A549 (cell line): ENCODE measurements at regions of chr14 and their contacts with region 1.

Region 1: GRCh38 chr14:22614224-22614799 is 16.2 kb downstream of the ABHD4 start:
- DNase-seq: peak; percentile 81 to 94
- ATAC-seq: peak; percentile 93 to 94
- H3K4me3 ChIP-seq: no peak overlapping the region
- H3K27ac ChIP-seq: peak overlapping the region; percentile 71 to 89
- H3K4me1 ChIP-seq: peaks cover 31% of the 10 kb centered on the region
- CTCF ChIP-seq: no peak
- EP300 ChIP-seq: peak in 1 of 2 experiments; percentile 74; a peak in 2 of 5 replicates
- POLR2A ChIP-seq: no peak
- RAD21 ChIP-seq: no peak

Region 2: DNA sequence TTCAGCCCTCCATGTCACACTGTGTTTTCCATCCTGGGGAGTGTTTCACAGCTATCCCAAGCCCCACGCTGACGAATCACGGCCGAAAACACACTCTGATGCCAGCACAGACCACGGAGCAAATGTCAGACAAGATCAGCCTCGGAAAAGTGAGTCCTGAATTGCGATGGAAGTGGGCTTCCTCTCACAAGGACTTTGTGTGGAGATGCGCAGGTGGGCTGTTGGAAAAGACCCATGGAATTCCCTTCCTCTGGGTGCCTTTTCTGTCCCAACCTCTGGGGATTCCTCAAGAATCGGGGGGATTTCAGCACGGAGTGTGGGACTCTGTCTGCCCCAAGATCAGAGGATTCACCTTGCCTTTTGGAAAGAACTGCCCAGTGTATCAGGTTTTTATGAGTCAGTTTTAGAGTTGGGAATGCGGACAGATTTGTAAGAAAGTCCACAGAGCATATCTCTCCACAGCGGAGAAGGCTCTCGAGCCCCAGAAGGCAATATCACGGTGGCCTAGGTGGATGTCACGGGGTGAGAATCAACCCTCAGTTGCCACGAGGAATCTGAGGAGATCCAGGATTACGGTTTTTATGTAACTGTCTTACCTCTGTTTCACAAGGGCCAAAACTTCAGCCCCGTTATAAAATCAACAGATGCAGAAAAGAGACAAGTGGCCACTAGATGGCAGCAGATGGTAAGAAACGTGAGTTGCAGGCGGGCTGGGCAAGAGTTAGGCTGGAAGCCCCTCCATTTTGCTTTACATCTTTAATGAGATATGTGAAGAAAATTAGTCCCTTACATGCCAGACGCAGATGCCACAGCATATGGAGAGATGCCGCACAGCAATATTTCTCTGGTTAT is 227.2 kb before region 1 on chr14:
- CTCF ChIA-PET with region 1: no interaction called
- POLR2A ChIA-PET with region 1: no interaction called
- DNase-seq: peak; percentile 72 to 82
- ATAC-seq: peak; percentile 55 to 78; a peak in 4 of 6 replicates
- H3K4me3 ChIP-seq: no peak overlapping the region
- H3K27ac ChIP-seq: no peak overlapping the region
- H3K4me1 ChIP-seq: peaks cover 32% of the 10 kb centered on the region
- CTCF ChIP-seq: peak; percentile 90
- EP300 ChIP-seq: no peak
- POLR2A ChIP-seq: no peak
- RAD21 ChIP-seq: peak; percentile 92 to 93

Region 3: GRCh38 chr14:22519877-22520685 is 94.2 kb before region 1 on chr14:
- CTCF ChIA-PET with region 1: no interaction called
- POLR2A ChIA-PET with region 1: no interaction called
- DNase-seq: no peak
- ATAC-seq: no peak
- H3K4me3 ChIP-seq: no peak overlapping the region
- H3K27ac ChIP-seq: no peak overlapping the region
- H3K4me1 ChIP-seq: no peaks in the 10 kb centered on the region
- CTCF ChIP-seq: no peak
- EP300 ChIP-seq: no peak
- POLR2A ChIP-seq: no peak
- RAD21 ChIP-seq: no peak

Region 4: GRCh38 chr14:22589096-22589839 is 25.0 kb before region 1 on chr14 and contains the start of gene DAD1:
- CTCF ChIA-PET with region 1: interaction called, 4 read pairs
- POLR2A ChIA-PET with region 1: interaction called, 14 read pairs
- DNase-seq: peak; percentile 99
- ATAC-seq: peak; percentile 96
- H3K4me3 ChIP-seq: peak within 1 kb of the TSS; percentile 80
- H3K27ac ChIP-seq: peak within 1 kb of the TSS; percentile 79 to 90
- H3K4me1 ChIP-seq: peaks cover 32% of the 10 kb centered on the region
- CTCF ChIP-seq: no peak; the same call in 2 of the 3 replicates
- EP300 ChIP-seq: no peak
- POLR2A ChIP-seq: peak; percentile 89
- RAD21 ChIP-seq: 0 out of 5 replicates have a peak, but pooled peaks of 1 of the 2 experiments have one; percentile 26
- polyA plus RNA-seq, gene DAD1: 458 and 474 TPM in 2 replicates